Activated CD8-positive, alpha-beta T cell treated with anti-CD3 and anti-CD28 coated beads for 36 hours (primary cell): ENCODE measurements at regions of chr21 and their contacts with region 1.

Region 1: DNA sequence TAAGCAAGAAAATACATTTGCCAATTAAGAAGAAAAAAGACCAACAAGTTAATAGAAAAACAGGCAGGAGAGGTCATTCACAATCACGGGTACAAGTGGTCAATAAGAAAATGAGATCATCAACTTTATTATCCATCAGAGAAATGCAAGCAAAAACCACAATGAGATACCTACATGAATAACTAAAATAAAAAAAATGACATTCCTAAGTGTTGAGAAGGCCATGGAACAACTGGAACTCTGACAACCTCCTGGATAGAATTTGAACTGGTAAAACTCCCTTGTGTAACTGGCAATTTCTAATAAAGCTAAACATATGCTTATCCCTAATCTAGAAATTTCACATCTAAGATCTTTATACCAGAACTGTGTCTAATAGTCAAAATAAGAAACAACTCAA is 135.4 kb upstream of the BACE2 start:
- DNase-seq: no peak
- ATAC-seq: no peak
- H3K4me3 Mint-ChIP-seq: no peak overlapping the region
- H3K27ac Mint-ChIP-seq: no peak overlapping the region
- H3K4me1 Mint-ChIP-seq: no peaks in the 10 kb centered on the region
- H3K27me3 Mint-ChIP-seq: peaks cover 14% of the 10 kb centered on the region
- CTCF ChIP-seq: no peak

Region 2: GRCh38 chr21:41011951-41012366 is 20.6 kb before region 1 on chr21:
- CTCF ChIA-PET with region 1: no interaction called
- POLR2A ChIA-PET with region 1: no interaction called
- intact Hi-C with region 1: no loop called
- DNase-seq: no peak
- ATAC-seq: no peak
- H3K4me3 Mint-ChIP-seq: no peak overlapping the region
- H3K27ac Mint-ChIP-seq: no peak overlapping the region
- H3K4me1 Mint-ChIP-seq: no peaks in the 10 kb centered on the region
- H3K27me3 Mint-ChIP-seq: peaks cover 7% of the 10 kb centered on the region
- CTCF ChIP-seq: no peak

Region 3: GRCh38 chr21:41090981-41091380 is 58.4 kb after region 1 on chr21:
- CTCF ChIA-PET with region 1: no interaction called
- POLR2A ChIA-PET with region 1: no interaction called
- intact Hi-C with region 1: loop called (anchors 10 kb)
- DNase-seq: no peak
- ATAC-seq: no peak
- H3K4me3 Mint-ChIP-seq: no peak overlapping the region
- H3K27ac Mint-ChIP-seq: no peak overlapping the region
- H3K4me1 Mint-ChIP-seq: no peaks in the 10 kb centered on the region
- H3K27me3 Mint-ChIP-seq: peaks cover 11% of the 10 kb centered on the region
- CTCF ChIP-seq: no peak